ENCODE measurements at regions of chr9 and their contacts with region 1.

Region 1: DNA sequence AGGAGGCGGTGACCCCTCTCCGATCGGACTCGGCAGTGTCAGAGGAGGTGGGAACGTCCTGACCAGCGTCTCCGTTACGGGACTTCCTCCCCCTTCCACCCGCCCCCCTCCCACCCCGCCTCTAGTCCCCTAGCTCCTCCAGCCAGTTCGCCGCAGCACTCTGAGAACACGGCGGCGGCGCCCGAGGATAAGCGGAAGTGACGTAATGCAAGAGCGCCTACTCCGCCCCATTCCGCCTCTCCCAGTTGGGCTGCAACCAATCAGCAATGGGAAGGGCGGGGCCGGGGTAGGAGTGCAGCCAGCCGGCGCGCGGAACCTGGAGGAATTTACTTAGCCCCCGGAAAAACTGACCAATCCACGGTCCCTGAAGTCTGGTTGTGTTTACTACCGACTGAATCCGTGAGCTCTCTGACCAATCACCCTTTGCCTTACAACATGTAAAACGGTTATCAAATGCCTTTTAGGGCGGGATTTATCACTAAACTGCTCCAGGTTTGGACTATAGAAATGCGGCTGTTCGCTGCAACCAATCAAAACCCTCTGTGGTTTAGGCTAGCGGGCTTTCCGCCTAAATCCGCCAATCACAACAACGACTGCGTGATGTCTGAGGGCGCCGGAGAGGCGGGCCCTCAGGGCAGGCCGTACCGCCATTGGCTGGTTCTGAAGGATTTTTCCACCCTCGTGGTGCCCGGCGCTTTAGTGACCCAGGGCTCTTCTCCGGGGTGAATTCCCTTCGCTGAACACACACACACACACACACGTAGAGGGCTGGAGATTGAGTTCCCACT is at the start of gene ZBTB5:
- DNase-seq: peak; percentile 99
- H3K4me3 Mint-ChIP-seq: peak within 1 kb of the TSS; percentile 93
- H3K27ac Mint-ChIP-seq: peak within 1 kb of the TSS; percentile 86
- H3K4me1 Mint-ChIP-seq: peaks cover 30% of the 10 kb centered on the region
- H3K27me3 Mint-ChIP-seq: no peaks in the 10 kb centered on the region
- total RNA-seq, gene ZBTB5: 10.2 TPM

Region 2: GRCh38 chr9:36924071-36924470 is 541.4 kb before region 1 on chr9:
- CTCF ChIA-PET with region 1: no interaction called
- intact Hi-C with region 1: loop called (anchors 1 kb)
- DNase-seq: peak; percentile 58
- H3K4me3 Mint-ChIP-seq: no peak overlapping the region
- H3K27ac Mint-ChIP-seq: peak overlapping the region; percentile 31
- H3K4me1 Mint-ChIP-seq: peaks cover 27% of the 10 kb centered on the region
- H3K27me3 Mint-ChIP-seq: peaks cover 16% of the 10 kb centered on the region

Region 3: DNA sequence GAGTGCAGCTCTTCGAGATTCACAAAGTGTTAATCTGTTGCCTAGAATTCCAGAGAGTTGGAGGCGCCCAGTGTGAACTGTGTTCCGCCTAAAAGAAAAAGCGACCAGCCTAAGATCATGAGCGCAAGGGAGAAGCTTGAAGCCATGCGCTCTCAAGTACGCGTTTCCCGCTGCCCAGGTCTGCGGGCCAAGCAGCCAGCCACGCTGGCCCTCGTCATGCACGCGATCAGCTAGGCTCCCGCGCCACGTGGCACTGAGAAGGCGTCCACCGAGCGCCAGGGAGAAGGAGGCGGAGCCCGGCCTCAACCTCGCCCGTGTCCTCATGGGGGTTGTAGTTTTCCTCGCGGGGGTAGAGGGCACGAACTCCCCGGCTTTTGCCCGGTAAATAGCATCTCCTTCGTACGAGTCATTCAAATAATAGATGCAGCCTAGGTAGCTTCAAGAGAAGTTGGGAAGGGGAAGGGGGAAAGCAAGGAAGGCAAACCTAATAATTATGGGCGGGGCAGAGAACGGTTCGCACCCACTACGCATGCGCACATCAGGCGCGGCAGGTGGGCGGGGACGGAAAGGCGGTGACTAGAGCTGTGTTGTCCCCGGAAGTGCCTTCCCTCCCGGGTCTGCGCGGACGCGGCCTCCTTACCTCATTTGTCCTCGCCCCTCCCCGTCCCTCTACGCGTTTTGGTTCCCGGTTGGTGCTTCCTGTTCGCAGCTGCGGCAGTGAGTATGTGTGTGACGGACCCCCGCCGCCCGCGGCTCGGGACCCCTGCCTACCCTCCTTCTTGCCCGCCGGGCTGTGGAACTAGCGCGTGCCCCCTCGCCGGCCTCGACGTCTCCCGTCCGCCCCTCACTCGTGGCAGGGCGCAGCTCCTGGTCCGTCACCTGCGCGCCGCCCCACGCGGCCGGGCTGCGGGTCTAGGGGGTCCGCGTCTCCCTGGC is 345.3 kb before region 1 on chr9 and contains the start of gene ZCCHC7:
- CTCF ChIA-PET with region 1: no interaction called
- intact Hi-C with region 1: loop called (anchors 1 kb)
- DNase-seq: peak; percentile 98
- H3K4me3 Mint-ChIP-seq: peak within 1 kb of the TSS; percentile 94
- H3K27ac Mint-ChIP-seq: peak within 1 kb of the TSS; percentile 96
- H3K4me1 Mint-ChIP-seq: peaks cover 35% of the 10 kb centered on the region
- H3K27me3 Mint-ChIP-seq: no peaks in the 10 kb centered on the region
- total RNA-seq, gene ZCCHC7: 28.8 to 29.1 TPM

Region 4: DNA sequence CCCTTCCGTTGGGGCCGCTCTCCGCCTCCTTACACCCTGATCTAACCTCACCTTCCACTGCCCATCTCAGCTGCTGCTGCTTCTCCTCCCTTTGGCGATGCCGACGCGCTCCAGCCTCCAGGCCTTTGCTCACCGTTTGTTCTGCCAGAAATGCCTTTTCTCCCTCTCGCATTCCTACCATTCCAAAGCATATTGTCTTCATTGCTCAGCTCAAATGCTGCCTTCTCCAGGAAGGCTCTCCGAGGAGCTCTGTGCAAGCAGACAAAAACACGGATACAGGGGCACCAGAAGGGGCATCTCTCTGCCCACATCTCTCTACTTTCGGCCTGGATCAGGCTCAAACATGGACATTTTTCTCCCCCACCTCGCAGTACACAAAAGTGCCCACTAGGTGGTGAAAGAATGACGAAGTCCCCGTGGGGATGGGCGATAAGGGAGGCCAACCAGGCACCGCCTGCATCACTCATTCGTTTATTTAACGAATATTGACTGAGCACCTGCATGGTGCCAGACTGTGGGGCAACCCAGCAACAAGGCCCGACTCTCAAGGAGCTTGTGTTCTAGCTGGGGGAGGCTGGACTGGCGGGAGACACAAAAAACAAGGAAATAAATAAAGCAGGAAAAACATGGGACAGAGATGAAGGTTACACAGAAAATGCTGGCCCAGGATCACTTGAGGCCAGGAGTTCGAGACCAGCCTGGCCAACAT is 50.3 kb before region 1 on chr9:
- CTCF ChIA-PET with region 1: interaction called, 4 read pairs
- intact Hi-C with region 1: loop called (anchors 1 kb)
- DNase-seq: peak; percentile 90
- H3K4me3 Mint-ChIP-seq: peak overlapping the region; percentile 34
- H3K27ac Mint-ChIP-seq: no peak overlapping the region
- H3K4me1 Mint-ChIP-seq: peaks cover 15% of the 10 kb centered on the region
- H3K27me3 Mint-ChIP-seq: peaks cover 5% of the 10 kb centered on the region

Region 5: GRCh38 chr9:37592108-37592951 is 126.9 kb after region 1 on chr9 and contains the start of gene TOMM5:
- CTCF ChIA-PET with region 1: no interaction called
- intact Hi-C with region 1: loop called (anchors 1 kb)
- DNase-seq: peak; percentile 96
- H3K4me3 Mint-ChIP-seq: peak within 1 kb of the TSS; percentile 92
- H3K27ac Mint-ChIP-seq: peak within 1 kb of the TSS; percentile 93
- H3K4me1 Mint-ChIP-seq: peaks cover 37% of the 10 kb centered on the region
- H3K27me3 Mint-ChIP-seq: peaks cover 3% of the 10 kb centered on the region
- total RNA-seq, gene TOMM5: 136 to 140 TPM

Measured in activated naive CD4-positive, alpha-beta T cell treated with anti-CD3 and anti-CD28 coated beads for 36 hours (primary cell).